ENCODE measurements at regions of chr19 and their contacts with region 1.

Region 1: DNA sequence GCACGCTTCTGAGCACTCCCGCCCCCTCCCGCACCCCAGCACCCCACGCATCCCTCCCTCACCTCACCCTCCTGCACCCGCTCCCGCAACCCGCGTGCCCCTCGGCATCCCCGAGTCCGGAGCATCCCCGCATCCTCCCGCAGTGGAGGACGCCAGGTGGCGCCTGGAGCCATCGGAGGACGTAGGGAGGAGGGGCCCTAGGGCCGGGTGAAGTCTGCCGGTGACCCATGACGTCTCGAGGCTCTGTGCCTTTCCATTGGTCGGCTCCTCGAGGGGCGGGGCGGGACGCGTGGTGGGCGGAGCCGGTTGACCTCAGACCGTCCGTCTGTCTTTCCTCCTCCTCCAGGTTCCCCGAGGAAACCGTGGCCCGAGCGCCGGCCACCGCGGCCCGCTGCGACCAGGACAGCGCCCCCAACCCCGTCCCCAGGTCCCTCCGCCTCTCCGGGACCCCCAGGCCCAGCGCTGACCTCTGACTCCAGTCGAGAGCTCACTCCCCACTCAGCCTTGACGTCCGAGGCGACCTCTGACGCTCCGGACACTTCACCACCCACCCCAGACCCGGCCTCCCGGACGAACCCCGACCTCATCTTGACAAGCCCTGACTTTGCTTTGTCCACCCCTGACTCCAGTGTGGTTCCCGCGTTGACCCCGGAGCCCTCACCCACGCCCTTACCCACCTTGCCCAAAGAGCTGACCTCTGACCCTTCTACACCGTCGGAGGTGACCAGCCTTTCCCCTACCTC is 19.9 kb downstream of the SBK2 start:
- DNase-seq: peak; percentile 90 to 96 (median 94)
- H3K4me3 ChIP-seq: peak overlapping the region; percentile 35
- H3K27ac ChIP-seq: peak overlapping the region; percentile 77 to 85
- H3K4me1 ChIP-seq: peaks cover 4% of the 10 kb centered on the region
- H3K27me3 ChIP-seq: no peaks in the 10 kb centered on the region
- CTCF ChIP-seq: peak; percentile 86 to 95 (median 92)
- EP300 ChIP-seq: no peak
- POLR2A ChIP-seq: no peak

Region 2: GRCh38 chr19:55426042-55426441 is 91.0 kb before region 1 on chr19:
- intact Hi-C with region 1: no loop called
- DNase-seq: no peak
- H3K4me3 ChIP-seq: no peak overlapping the region
- H3K27ac ChIP-seq: no peak overlapping the region
- H3K4me1 ChIP-seq: no peaks in the 10 kb centered on the region
- H3K27me3 ChIP-seq: no peaks in the 10 kb centered on the region
- CTCF ChIP-seq: no peak
- EP300 ChIP-seq: no peak
- POLR2A ChIP-seq: no peak

Region 3: DNA sequence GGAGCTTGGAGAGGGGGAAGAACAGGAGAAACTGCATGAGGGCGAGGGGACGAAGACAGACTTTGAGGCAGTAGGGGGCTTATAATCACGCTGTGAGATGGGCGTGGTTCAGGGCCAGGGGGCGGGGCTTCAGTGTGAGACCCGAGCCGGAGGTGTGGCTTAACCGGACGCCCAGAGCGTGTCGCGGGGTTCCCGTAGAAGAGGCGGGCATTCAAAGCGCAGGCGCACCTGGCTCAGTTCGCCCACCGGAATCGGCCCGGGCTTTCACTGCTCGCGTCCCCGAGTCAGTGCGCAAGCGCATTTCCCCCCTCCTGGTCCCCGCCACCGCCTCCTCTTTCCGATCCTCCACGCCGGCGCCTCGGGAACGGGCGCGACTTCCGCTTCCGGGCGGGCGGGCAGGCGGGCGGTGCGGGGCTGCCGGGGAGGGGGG is 88.2 kb after region 1 on chr19:
- intact Hi-C with region 1: loop called (anchors 2 to 5 kb)
- DNase-seq: peak; percentile 98 to 99 (median 99)
- H3K4me3 ChIP-seq: peak overlapping the region; percentile 73
- H3K27ac ChIP-seq: peak overlapping the region; percentile 89 to 91
- H3K4me1 ChIP-seq: peaks cover 6% of the 10 kb centered on the region
- H3K27me3 ChIP-seq: no peaks in the 10 kb centered on the region
- CTCF ChIP-seq: no peak
- EP300 ChIP-seq: no peak
- POLR2A ChIP-seq: no peak

Region 4: GRCh38 chr19:55624109-55625003 is 107.3 kb after region 1 on chr19 and contains the start of gene ZNF784:
- intact Hi-C with region 1: loop called in 1 of 4 experiments (anchors 5 kb)
- DNase-seq: peak; percentile 92 to 96 (median 95)
- H3K4me3 ChIP-seq: peak within 1 kb of the TSS; percentile 60
- H3K27ac ChIP-seq: peak within 1 kb of the TSS; percentile 90 to 91
- H3K4me1 ChIP-seq: peaks cover 4% of the 10 kb centered on the region
- H3K27me3 ChIP-seq: no peaks in the 10 kb centered on the region
- CTCF ChIP-seq: no peak
- EP300 ChIP-seq: no peak
- POLR2A ChIP-seq: peak; percentile 79
- total RNA-seq, gene ZNF784: 6.5 to 16.9 (median 11.7) TPM

Region 5: DNA sequence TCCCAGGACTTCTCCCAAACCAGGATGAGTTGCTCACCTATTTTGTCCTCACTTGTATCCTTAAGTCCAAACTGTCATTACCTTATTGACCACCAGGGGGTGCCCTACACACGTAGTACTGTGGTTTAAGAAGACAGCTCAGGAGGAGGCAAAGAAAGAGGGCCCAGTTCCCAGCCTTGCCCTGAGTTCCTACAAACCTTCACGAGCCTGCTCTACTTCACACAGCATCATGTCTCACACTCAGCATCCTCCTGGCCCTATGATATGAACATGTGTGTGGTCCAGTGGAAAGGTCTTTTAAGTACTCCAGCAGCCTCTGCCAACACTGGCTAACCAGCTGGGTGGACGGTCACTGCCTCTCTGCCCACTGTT is 115.4 kb after region 1 on chr19:
- intact Hi-C with region 1: loop called in 1 of 4 experiments (anchors 5 kb)
- DNase-seq: peak; percentile 63 to 93 (median 81)
- H3K4me3 ChIP-seq: no peak overlapping the region
- H3K27ac ChIP-seq: no peak overlapping the region
- H3K4me1 ChIP-seq: peaks cover 10% of the 10 kb centered on the region
- H3K27me3 ChIP-seq: no peaks in the 10 kb centered on the region
- CTCF ChIP-seq: peak; percentile 77 to 90 (median 79)
- EP300 ChIP-seq: no peak
- POLR2A ChIP-seq: no peak

Measured in ovary (tissue), 10 donors.